Left ventricle myocardium superior (tissue), 1 donor: ENCODE measurements at regions of chr21 and their contacts with region 1.

Region 1: DNA sequence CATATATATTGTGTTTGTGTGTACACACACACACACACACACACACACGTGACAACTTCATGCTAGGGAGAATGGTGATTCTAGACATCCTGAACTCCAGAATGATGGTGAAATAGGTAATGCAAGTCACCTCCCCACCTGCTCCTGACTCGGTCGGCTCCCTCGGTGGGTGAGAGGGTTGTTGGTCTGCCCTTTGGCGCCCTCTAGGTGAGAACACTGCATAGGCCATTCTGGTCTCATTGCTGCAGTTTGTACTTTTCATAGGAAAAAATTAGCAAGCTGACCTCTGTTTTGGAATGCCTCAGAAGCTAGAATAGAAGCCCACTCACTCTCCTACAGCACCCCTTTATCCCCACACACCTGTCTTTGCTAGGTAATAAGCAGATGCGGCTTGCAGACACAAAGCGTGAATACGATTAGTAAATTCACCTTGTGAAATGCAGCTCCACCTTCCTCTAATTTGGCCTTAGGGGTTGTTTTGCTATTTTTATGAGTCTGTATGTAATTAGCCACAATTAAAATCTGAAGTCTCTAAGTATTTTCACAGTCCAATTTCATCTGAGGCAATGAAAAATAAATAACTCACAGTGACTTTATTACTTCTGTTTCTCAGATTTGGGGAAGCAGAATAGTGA is 130.0 kb upstream of the KCNJ15 start:
- DNase-seq: peak; percentile 59
- ATAC-seq: peak; percentile 74

Region 2: GRCh38 chr21:37711836-37712568 is 414.8 kb before region 1 on chr21:
- intact Hi-C with region 1: loop called (anchors 5 kb)
- DNase-seq: peak; percentile 77
- ATAC-seq: peak; percentile 82

Region 3: GRCh38 chr21:38095220-38095619 is 31.6 kb before region 1 on chr21:
- intact Hi-C with region 1: no loop called
- DNase-seq: no peak
- ATAC-seq: no peak